Pancreas (tissue), 10 donors: ENCODE measurements at regions of chr15 and their contacts with region 1.

Region 1: GRCh38 chr15:77550292-77551251 is 82.1 kb downstream of the LINGO1 start:
- DNase-seq: peak in 1 of 6 donors; percentile 26
- ATAC-seq: no peak
- H3K4me3 ChIP-seq: no peak overlapping the region
- H3K27ac ChIP-seq: no peak overlapping the region
- H3K4me1 ChIP-seq: no peaks in the 10 kb centered on the region
- H3K27me3 ChIP-seq: no peaks in the 10 kb centered on the region
- CTCF ChIP-seq: no peak

Region 2: DNA sequence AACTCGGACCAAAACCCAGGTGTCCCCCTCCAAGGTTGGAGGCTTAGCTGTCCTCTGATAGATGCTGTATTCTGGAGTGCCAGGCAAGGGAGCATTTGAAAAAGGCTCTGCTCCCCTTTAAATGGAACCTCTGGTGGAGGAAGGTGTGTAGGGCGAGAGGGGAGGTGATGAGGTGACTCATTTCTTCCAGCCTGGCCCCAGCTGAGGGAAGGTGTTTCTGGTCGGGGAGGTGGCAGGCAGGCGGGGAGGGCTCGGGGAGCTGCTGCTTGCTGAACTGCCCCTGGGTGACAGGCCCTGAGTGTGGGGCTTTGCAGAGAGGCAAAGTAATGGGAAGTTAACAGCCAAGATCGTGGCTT is 536.8 kb before region 1 on chr15:
- intact Hi-C with region 1: loop called in 1 of 3 experiments (anchors 10 kb)
- DNase-seq: peak in 1 of 6 donors; percentile 39
- ATAC-seq: peak in 3 of 4 donors; percentile 32 to 42 (median 37)
- H3K4me3 ChIP-seq: no peak overlapping the region
- H3K27ac ChIP-seq: no peak overlapping the region
- H3K4me1 ChIP-seq: no peaks in the 10 kb centered on the region
- H3K27me3 ChIP-seq: no peaks in the 10 kb centered on the region
- CTCF ChIP-seq: no peak

Region 3: DNA sequence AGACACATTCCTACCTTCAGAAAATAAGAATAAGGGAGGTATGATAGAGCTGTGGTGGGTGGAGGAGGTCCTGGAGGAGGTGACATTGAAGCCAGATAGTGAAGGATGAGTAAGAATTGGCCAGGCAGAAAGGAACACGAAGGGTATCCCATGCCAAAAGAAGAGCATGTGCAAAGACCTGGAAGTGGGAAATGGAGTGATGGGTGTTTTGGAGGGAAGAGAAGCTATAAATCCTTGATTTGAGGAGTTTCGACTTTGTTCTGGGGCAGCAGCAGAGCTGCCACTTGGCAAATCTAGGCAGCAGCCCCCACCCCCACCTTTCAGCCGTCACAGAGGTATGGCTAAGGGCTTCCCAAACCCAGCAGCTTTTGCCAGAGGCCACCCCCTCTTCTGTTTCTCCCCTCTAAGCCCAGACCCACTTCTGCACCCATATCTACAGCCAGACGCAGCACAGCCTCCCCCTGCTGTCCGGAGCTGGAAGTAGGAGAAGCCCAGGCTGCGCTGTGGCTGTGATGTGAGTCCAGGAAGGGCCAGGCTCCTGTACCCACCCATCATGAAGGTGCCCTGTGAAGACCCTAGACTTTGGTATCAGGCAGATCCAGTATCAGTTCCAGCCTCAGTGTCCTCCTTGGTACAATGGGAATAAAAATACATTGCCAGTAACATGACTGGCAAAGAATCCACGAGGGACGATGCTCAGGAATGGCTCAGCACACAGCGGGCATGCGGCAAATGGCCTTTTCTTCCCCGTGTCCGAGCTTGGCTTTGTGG is 270.8 kb after region 1 on chr15:
- intact Hi-C with region 1: no loop called
- DNase-seq: peak in 5 of 6 donors; percentile 21 to 77 (median 52)
- ATAC-seq: peak; percentile 64 to 89 (median 87)
- H3K4me3 ChIP-seq: no peak overlapping the region
- H3K27ac ChIP-seq: no peak overlapping the region
- H3K4me1 ChIP-seq: peaks cover 0 to 5% (median 0%) of the 10 kb centered on the region in 3 donors
- H3K27me3 ChIP-seq: peaks cover 0 to 27% (median 3%) of the 10 kb centered on the region in 4 donors
- CTCF ChIP-seq: peak; percentile 13 to 51 (median 38)